Transverse colon (tissue), 4 donors: ENCODE measurements at regions of chr6 and their contacts with region 1.

Region 1: DNA sequence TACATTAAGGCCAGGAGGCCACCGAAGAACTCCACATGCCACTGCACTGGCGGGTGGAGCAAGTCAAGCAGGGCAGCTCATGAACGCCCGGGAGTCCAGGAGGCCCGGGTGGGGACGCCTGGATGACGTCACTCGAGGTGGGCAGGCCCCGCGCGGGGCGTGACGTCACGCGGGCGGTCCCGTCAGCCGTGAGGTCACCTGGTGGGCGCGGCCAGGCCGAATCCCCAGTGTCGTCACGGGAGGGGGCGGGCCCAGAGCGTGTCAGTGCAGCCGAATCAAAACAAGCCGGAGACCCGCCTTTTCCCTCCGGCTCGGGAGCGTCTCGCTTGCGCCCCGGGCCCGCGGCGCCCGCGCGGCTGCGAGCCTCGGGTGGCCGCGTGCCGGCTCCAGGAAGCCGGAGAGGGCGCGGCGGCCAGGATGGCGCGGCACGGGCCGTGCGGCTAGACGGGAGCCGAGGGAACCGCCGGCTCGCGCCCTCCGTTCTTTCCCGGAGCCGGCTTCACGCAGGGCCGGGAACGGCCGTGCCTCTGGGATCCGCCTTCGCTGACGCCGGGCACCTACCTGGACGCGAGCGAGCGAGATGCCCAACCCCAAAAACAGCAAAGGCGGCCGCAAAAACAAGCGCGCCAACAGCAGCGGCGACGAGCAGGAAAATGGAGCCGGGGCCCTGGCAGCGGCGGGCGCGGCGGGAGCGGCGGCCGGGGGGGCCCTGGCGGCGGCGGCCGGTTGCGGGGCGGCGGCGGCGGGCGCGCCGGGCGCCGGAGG is at the start of gene HECA:
- DNase-seq: peak; percentile 99
- H3K4me3 ChIP-seq: peak within 1 kb of the TSS; percentile 90 to 98 (median 96)
- H3K27ac ChIP-seq: peak within 1 kb of the TSS; percentile 96 to 97 (median 97)
- H3K4me1 ChIP-seq: peaks cover 0 to 38% (median 18%) of the 10 kb centered on the region in 4 donors
- H3K27me3 ChIP-seq: no peaks in the 10 kb centered on the region
- CTCF ChIP-seq: peak in 1 of 5 experiments; percentile 47
- EP300 ChIP-seq: no peak
- POLR2A ChIP-seq: peak; percentile 78
- total RNA-seq, gene HECA: 34.4 to 53.7 (median 45.5) TPM

Region 2: GRCh38 chr6:137927777-137928218 is 1207.2 kb before region 1 on chr6:
- in situ Hi-C with region 1: no loop called
- intact Hi-C with region 1: loop called (anchors 5 kb)
- DNase-seq: peak; percentile 47
- H3K4me3 ChIP-seq: no peak overlapping the region
- H3K27ac ChIP-seq: peak overlapping the region in 1 of 4 donors; percentile 36
- H3K4me1 ChIP-seq: peaks cover 0 to 15% (median 6%) of the 10 kb centered on the region in 4 donors
- H3K27me3 ChIP-seq: no peaks in the 10 kb centered on the region
- CTCF ChIP-seq: no peak
- EP300 ChIP-seq: no peak
- POLR2A ChIP-seq: no peak